PC-9 (cell line): ENCODE measurements at regions of chr5 and their contacts with region 1.

Region 1: DNA sequence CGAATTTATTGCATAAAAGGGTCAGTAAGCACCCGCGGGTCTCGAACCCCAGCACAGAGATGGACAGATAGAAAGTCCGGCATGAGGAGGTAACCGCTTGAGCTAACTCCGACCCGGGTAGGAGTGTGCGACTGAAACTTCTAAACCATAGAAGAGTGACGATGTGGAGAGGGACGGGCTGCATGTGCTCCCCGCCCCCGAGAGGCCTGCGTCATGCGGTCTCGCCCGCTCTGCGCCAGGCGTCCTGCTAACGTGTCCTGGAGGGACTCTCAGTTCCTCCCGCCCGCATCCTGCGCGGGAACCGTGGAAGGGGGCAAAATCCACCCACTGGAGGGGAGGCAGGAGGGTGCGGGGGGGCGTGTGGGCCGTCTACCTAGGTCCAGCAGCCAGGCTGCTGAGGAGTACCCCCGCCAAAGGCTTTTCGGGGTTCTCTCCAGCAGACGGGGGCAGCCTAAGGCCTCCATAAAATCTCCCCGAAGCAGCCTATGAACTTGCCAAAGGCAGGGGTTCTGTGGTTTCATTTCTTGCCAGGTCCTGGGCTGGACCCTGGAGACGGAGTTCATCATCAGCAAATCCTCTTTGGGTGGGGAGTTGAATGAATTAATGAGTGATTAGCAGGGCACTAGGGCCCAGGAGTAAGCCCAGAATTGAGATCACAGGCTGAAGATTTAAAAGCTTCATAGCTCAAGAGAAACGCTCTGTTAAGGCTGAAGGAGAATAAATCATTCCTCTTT is 51.9 kb downstream of the TGFBI start:
- DNase-seq: peak; percentile 85 to 94
- H3K4me3 ChIP-seq: peak overlapping the region; percentile 65
- H3K27ac ChIP-seq: peak overlapping the region; percentile 26
- H3K4me1 ChIP-seq: peaks cover 5% of the 10 kb centered on the region
- H3K27me3 ChIP-seq: no peaks in the 10 kb centered on the region
- CTCF ChIP-seq: no peak

Region 2: DNA sequence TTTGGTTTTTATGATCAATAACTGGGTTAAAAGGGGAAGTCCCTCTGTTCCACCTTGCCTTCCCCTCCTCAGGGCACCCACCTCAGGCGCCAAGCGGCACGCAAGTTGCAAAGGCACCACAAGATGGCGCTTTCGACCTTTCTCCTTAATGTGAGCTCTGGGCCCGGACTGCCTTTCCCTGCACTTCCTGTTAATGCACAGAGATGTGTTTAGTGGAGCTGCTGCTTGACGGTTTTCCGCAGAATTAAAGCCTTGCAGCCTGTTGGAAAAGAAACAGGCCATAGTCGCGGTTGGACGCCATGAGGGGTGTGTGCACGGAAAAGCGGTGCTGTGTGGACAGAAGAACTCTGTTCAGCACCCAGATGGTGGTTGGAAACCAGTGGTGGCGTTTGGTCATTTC is 519.8 kb before region 1 on chr5:
- CTCF ChIA-PET with region 1: no interaction called
- POLR2A ChIA-PET with region 1: no interaction called
- intact Hi-C with region 1: loop called (anchors 10 kb)
- DNase-seq: peak; percentile 44 to 65
- H3K4me3 ChIP-seq: no peak overlapping the region
- H3K27ac ChIP-seq: no peak overlapping the region
- H3K4me1 ChIP-seq: no peaks in the 10 kb centered on the region
- H3K27me3 ChIP-seq: peaks cover 66% of the 10 kb centered on the region
- CTCF ChIP-seq: peak; percentile 75

Region 3: DNA sequence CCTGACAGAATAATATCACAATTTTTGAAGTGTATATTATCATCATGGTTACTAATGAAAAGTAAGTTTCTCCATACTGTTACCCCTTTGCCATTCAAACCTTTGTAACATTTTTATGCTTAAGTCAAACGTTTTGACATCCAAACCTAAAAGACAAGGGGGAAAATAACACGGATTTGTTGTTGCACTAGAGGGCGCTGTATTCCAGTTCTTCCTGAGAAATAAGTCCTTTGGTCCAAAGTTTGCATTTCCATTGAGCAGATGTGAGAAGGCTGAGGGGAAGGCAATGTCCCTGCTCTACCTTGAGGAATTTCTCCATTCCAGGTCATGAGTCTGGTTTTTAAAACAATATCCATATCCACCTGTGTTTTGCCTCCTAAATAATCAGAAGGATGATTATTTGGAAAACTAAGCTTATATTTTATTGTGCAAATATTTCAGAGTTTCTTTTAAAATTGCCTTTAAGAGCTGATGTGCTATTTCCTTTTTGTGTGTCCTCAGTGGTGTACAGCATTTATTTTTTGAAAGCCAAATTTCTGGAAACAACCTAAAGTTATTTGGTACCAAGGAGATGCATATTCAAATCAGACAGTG is 135.6 kb before region 1 on chr5:
- CTCF ChIA-PET with region 1: interaction called, 8 read pairs
- POLR2A ChIA-PET with region 1: no interaction called
- intact Hi-C with region 1: loop called (anchors 1 kb)
- DNase-seq: peak; percentile 31 to 62
- H3K4me3 ChIP-seq: no peak overlapping the region
- H3K27ac ChIP-seq: no peak overlapping the region
- H3K4me1 ChIP-seq: no peaks in the 10 kb centered on the region
- H3K27me3 ChIP-seq: no peaks in the 10 kb centered on the region
- CTCF ChIP-seq: peak; percentile 91

Region 4: GRCh38 chr5:136042665-136043121 is 38.0 kb before region 1 on chr5:
- CTCF ChIA-PET with region 1: no interaction called
- POLR2A ChIA-PET with region 1: no interaction called
- intact Hi-C with region 1: no loop called
- DNase-seq: no peak
- H3K4me3 ChIP-seq: no peak overlapping the region
- H3K27ac ChIP-seq: no peak overlapping the region
- H3K4me1 ChIP-seq: peaks cover 32% of the 10 kb centered on the region
- H3K27me3 ChIP-seq: no peaks in the 10 kb centered on the region
- CTCF ChIP-seq: no peak

Region 5: GRCh38 chr5:136132557-136133221 is 52.0 kb after region 1 on chr5 and contains the start of gene SMAD5:
- CTCF ChIA-PET with region 1: no interaction called
- POLR2A ChIA-PET with region 1: interaction called, 17 read pairs
- intact Hi-C with region 1: no loop called
- DNase-seq: peak; percentile 77 to 94
- H3K4me3 ChIP-seq: peak within 1 kb of the TSS; percentile 78
- H3K27ac ChIP-seq: peak within 1 kb of the TSS; percentile 60
- H3K4me1 ChIP-seq: peaks cover 19% of the 10 kb centered on the region
- H3K27me3 ChIP-seq: no peaks in the 10 kb centered on the region
- CTCF ChIP-seq: no peak
- total RNA-seq, gene SMAD5: 50.6 and 58.2 TPM in 2 replicates

Region 6: DNA sequence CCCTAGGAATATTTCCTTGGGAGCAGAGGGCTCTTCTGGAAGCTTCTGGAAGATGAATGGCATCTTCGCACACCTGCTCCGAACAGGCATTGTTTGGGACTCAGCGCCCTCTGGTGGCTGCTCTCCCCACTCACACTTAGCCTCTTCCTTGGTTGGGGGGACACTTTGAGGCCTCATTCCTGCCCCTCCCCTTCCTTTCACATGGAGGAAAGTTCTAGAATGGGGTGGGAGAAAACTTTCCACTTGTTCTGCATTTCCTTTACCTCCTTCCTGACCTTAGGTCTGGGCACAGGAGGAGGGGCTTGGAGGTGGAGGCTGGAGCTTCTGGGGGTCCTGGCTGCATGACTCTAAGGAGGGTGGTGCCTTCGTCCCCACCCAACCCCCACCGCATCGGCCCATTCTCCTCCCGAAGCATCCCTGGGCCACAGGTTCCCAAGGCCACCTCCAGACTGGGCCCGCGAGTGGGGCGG is 131.6 kb after region 1 on chr5:
- CTCF ChIA-PET with region 1: no interaction called
- POLR2A ChIA-PET with region 1: no interaction called
- intact Hi-C with region 1: loop called (anchors 5 kb)
- DNase-seq: peak in 1 of 2 experiments; percentile 29
- H3K4me3 ChIP-seq: no peak overlapping the region
- H3K27ac ChIP-seq: no peak overlapping the region
- H3K4me1 ChIP-seq: no peaks in the 10 kb centered on the region
- H3K27me3 ChIP-seq: no peaks in the 10 kb centered on the region
- CTCF ChIP-seq: peak; percentile 91

Region 7: GRCh38 chr5:136232316-136232715 is 151.7 kb after region 1 on chr5:
- CTCF ChIA-PET with region 1: no interaction called
- POLR2A ChIA-PET with region 1: no interaction called
- intact Hi-C with region 1: no loop called
- DNase-seq: no peak
- H3K4me3 ChIP-seq: no peak overlapping the region
- H3K27ac ChIP-seq: no peak overlapping the region
- H3K4me1 ChIP-seq: no peaks in the 10 kb centered on the region
- H3K27me3 ChIP-seq: 0 out of 2 replicates have a peak, but pooled peaks cover 12% of the 10 kb centered on the region
- CTCF ChIP-seq: no peak